ENCODE measurements at regions of chr6 and their contacts with region 1.

Region 1: DNA sequence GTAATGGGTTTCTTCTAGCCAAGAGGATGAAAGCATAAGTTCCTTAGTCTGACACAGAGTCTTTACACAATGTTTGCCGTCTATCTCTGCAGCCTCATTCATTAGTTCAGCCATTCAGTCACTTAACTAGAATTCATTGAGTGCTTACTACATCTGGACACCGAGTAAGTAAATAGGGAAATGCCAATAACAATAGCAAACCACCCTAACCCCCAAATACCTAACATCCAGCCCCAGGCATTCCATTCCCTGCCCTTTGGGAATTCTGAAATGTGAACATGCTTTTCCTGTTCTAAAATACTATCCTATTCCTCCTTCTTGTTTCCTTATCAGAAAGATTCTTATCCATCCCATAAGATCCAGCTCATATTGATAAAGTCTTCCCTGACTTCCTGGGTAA is 277.6 kb upstream of the RNF217 start:
- DNase-seq: no peak
- H3K4me3 ChIP-seq: no peak overlapping the region
- H3K27ac ChIP-seq: no peak overlapping the region
- H3K4me1 ChIP-seq: no peaks in the 10 kb centered on the region
- H3K27me3 ChIP-seq: no peaks in the 10 kb centered on the region
- CTCF ChIP-seq: no peak
- EP300 ChIP-seq: no peak
- POLR2A ChIP-seq: no peak

Region 2: DNA sequence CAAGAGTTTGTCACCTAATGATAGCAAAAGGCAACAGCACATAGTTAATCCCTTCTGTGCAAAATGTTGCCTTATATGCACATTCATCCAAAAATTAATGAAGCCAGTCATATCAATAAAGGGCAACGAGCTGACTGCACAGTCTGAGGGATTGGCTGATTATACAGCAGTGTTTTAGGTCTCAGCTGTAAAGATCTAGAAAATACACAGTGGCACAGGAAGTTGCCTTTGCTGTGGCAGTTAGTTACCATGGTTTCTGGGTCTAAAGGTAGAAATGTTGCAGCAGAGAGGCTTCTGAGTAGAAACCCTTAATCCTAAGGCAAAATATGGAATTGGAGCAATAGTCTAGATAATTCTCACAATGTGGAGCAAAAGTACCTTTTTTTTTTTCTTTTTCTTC is 1805.8 kb before region 1 on chr6:
- in situ Hi-C with region 1: no loop called
- intact Hi-C with region 1: loop called (anchors 5 kb)
- DNase-seq: no peak
- H3K4me3 ChIP-seq: no peak overlapping the region
- H3K27ac ChIP-seq: no peak overlapping the region
- H3K4me1 ChIP-seq: no peaks in the 10 kb centered on the region
- H3K27me3 ChIP-seq: no peaks in the 10 kb centered on the region
- CTCF ChIP-seq: no peak
- EP300 ChIP-seq: no peak
- POLR2A ChIP-seq: no peak

Region 3: DNA sequence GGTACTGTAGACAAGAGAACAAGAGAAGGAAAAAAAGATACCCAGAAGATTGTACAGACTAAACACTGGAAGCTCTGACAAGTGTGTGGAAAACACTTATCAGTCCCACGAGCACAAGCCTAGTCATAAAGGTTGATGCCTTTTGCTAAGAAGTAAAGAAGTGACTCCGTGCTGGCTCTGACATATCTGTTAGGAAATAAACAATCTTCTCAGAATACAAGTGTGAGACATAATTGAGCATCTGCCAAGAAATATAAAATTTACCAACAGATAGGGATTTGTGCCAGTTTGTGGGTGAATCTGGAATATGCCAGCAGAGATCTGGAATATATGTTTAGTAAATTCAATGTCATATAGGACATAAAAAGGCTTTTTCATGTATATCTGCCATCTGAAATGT is 18.9 kb after region 1 on chr6:
- in situ Hi-C with region 1: no loop called
- intact Hi-C with region 1: no loop called
- DNase-seq: no peak
- H3K4me3 ChIP-seq: no peak overlapping the region
- H3K27ac ChIP-seq: no peak overlapping the region
- H3K4me1 ChIP-seq: no peaks in the 10 kb centered on the region
- H3K27me3 ChIP-seq: no peaks in the 10 kb centered on the region
- CTCF ChIP-seq: no peak
- EP300 ChIP-seq: no peak
- POLR2A ChIP-seq: no peak

Measured in transverse colon (tissue), 4 donors.